ENCODE measurements at regions of chr6 and their contacts with region 1.

Region 1: DNA sequence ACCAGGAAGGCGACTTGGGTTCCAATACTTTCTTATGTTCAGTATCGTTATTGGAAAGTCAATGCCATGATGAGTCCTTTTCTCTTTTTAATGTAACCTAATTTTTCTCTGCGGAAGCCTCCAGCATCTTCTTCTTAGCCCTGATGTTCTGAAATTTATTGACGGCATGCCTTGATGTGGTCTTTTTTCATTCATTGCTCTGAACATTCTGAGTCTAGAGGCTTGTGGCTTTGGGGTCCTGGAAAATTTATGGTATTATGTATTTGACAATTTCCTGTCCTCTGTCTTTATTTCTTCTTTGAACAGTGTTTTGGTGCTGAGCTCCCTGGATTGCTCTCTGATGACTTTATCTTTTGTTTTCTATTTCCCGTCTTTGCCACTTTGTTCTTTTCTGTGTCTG is 28.7 kb upstream of the MAS1 start:
- DNase-seq: no peak
- ATAC-seq: no peak
- H3K4me3 ChIP-seq: no peak overlapping the region
- H3K27ac ChIP-seq: no peak overlapping the region
- H3K4me1 ChIP-seq: 0 out of 2 replicates have a peak, but pooled peaks cover 9% of the 10 kb centered on the region
- H3K27me3 ChIP-seq: peaks cover 10% of the 10 kb centered on the region in 2 experiments; a peak in 3 of 5 replicates
- CTCF ChIP-seq: no peak
- EP300 ChIP-seq: no peak
- POLR2A ChIP-seq: no peak
- RAD21 ChIP-seq: no peak

Region 2: DNA sequence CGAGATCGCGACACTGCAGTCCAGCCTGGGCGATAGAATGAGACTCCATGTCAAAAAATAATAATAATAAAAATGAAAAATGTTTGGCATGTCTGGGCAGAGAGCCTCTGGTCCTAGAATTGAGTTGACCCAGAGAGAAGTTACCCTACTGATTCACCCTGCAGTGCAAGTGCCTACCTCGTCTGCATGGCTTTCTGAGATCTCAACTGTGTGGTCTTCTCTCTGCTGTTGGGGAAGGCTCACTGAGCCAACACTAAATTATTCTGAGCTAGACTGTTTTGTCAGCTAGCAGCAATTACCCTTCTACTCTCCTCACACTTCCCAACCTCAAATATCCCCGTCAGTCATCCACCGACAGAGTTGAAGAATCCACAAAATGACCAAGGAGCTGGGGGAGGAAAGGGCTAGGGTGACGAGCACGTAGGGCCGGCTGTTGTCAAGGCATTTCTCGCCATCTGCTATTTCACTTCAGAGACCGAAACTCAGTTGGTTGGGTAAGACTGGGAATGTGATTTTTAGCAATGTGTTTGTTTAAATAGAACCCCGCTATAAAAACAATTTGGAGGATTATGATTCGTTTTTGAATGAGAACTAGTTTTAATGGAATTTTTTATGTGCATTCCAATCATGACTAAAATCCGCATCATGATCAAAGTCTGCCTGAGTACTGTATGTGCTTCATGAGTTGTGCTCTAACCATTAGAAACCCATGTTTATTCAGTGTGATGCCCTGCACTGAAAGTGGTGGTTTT is 38.1 kb after region 1 on chr6:
- CTCF ChIA-PET with region 1: no interaction called
- POLR2A ChIA-PET with region 1: no interaction called
- in situ Hi-C with region 1: no loop called
- intact Hi-C with region 1: loop called (anchors 1 kb)
- DNase-seq: no peak
- ATAC-seq: no peak
- H3K4me3 ChIP-seq: no peak overlapping the region
- H3K27ac ChIP-seq: no peak overlapping the region
- H3K4me1 ChIP-seq: no peaks in the 10 kb centered on the region
- H3K27me3 ChIP-seq: peaks cover 2 to 43% of the 10 kb centered on the region in 2 experiments
- CTCF ChIP-seq: no peak
- EP300 ChIP-seq: no peak
- POLR2A ChIP-seq: no peak
- RAD21 ChIP-seq: no peak

Region 3: GRCh38 chr6:159941286-159942113 is 79.4 kb after region 1 on chr6:
- CTCF ChIA-PET with region 1: interaction called, 18 read pairs
- POLR2A ChIA-PET with region 1: no interaction called
- in situ Hi-C with region 1: loop called (anchors 5 kb)
- intact Hi-C with region 1: loop called (anchors 1 kb)
- DNase-seq: peak; percentile 46
- ATAC-seq: peak; percentile 83
- H3K4me3 ChIP-seq: no peak overlapping the region
- H3K27ac ChIP-seq: no peak overlapping the region
- H3K4me1 ChIP-seq: peaks cover 14% of the 10 kb centered on the region
- H3K27me3 ChIP-seq: peaks cover 2 to 8% of the 10 kb centered on the region in 2 experiments; a peak in 2 of 5 replicates
- CTCF ChIP-seq: peak; percentile 80
- EP300 ChIP-seq: no peak
- POLR2A ChIP-seq: no peak
- RAD21 ChIP-seq: peak; percentile 61; the same call in 1 of the 2 replicates

Region 4: GRCh38 chr6:160041608-160042007 is 179.5 kb after region 1 on chr6:
- CTCF ChIA-PET with region 1: no interaction called
- POLR2A ChIA-PET with region 1: no interaction called
- in situ Hi-C with region 1: no loop called
- intact Hi-C with region 1: loop called (anchors 5 kb)
- DNase-seq: peak; percentile 22
- ATAC-seq: peak; percentile 51
- H3K4me3 ChIP-seq: no peak overlapping the region
- H3K27ac ChIP-seq: peak overlapping the region; percentile 68
- H3K4me1 ChIP-seq: peaks cover 34% of the 10 kb centered on the region
- H3K27me3 ChIP-seq: no peaks in the 10 kb centered on the region
- CTCF ChIP-seq: 0 out of 2 replicates have a peak, but pooled peaks have one; percentile 19
- EP300 ChIP-seq: no peak
- POLR2A ChIP-seq: no peak
- RAD21 ChIP-seq: peak; percentile 31; the same call in 1 of the 2 replicates

Region 5: GRCh38 chr6:160102956-160103824 is 241.1 kb after region 1 on chr6:
- CTCF ChIA-PET with region 1: interaction called, 4 read pairs
- POLR2A ChIA-PET with region 1: no interaction called
- in situ Hi-C with region 1: no loop called
- intact Hi-C with region 1: loop called (anchors 1 kb)
- DNase-seq: peak; percentile 45
- ATAC-seq: peak; percentile 53
- H3K4me3 ChIP-seq: no peak overlapping the region
- H3K27ac ChIP-seq: no peak overlapping the region
- H3K4me1 ChIP-seq: peaks cover 34% of the 10 kb centered on the region
- H3K27me3 ChIP-seq: no peaks in the 10 kb centered on the region
- CTCF ChIP-seq: peak; percentile 53
- EP300 ChIP-seq: no peak
- POLR2A ChIP-seq: no peak
- RAD21 ChIP-seq: peak; percentile 32; the same call in 1 of the 2 replicates

Region 6: DNA sequence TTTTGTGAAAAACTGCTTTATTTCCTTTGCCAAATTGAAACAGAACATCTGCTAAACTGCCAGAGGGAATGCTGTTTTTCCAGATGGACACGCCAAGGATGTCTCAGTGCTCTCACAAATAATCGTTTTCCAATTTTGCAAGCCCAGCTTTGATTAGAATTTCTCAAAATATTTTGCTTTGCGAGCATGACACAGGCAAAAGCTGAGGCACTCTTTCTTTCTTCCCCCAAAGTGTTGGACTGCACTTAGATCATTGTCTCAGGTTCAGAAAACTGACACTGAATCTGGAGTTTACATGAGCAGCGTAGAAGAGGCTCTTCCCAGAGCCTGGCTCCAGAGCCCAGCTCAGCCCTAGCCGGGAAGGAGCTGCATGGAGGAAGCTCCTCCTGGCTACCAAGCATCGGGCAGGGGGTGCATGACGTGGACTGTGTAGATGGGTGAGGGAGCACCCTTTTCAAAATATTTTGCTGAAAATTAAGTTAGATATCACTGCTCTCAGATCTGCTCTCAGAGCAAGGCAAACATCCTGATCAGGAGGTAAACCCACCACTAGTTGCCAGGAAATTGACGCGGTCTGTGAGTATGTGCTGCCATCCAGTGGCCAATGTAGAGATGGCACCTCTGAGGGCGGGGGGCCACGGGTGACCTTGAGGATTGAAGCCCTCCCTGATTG is 593.6 kb after region 1 on chr6:
- CTCF ChIA-PET with region 1: interaction called, 9 read pairs
- POLR2A ChIA-PET with region 1: no interaction called
- in situ Hi-C with region 1: loop called (anchors 5 kb)
- intact Hi-C with region 1: loop called (anchors 1 kb)
- DNase-seq: peak; percentile 62
- ATAC-seq: peak; percentile 86
- H3K4me3 ChIP-seq: no peak overlapping the region
- H3K27ac ChIP-seq: no peak overlapping the region
- H3K4me1 ChIP-seq: peaks cover 8% of the 10 kb centered on the region
- H3K27me3 ChIP-seq: no peaks in the 10 kb centered on the region
- CTCF ChIP-seq: peak; percentile 100
- EP300 ChIP-seq: no peak
- POLR2A ChIP-seq: no peak
- RAD21 ChIP-seq: peak; percentile 97

Region 7: DNA sequence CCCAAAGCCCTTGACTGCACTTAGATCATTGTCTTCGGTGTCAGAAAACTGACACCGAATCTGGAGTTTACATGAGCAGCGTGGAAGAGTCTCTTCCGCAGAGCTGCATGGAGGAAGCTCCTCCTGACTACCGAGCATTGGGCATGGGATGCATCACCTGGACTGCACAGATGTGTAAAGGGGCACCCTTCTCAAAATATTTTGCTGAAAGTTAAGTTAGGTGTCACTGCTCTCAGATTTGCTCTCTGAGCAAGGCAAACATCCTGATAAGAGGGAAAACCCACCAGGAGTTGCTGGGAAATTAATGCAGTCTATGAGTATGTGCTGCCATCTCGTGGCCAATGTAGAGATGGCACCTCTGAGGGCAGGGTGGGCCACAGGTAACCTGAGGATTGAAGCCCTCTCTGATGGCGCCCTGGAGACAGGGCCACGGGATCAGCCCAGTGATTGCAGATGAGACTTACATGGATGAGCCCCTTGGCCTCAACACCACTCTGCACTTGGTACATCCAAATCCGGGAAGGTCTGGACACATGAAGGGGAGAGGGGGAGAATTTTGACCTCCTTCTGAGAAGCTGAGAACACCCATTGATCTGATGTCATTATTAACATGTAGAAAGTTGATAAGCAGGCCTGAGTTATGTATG is 672.1 kb after region 1 on chr6:
- CTCF ChIA-PET with region 1: interaction called, 4 read pairs
- POLR2A ChIA-PET with region 1: no interaction called
- in situ Hi-C with region 1: no loop called
- intact Hi-C with region 1: loop called (anchors 1 kb)
- DNase-seq: peak; percentile 52
- ATAC-seq: peak; percentile 96
- H3K4me3 ChIP-seq: no peak overlapping the region
- H3K27ac ChIP-seq: no peak overlapping the region
- H3K4me1 ChIP-seq: peaks cover 4% of the 10 kb centered on the region; the same call in 1 of the 2 replicates
- H3K27me3 ChIP-seq: no peaks in the 10 kb centered on the region
- CTCF ChIP-seq: peak; percentile 97
- EP300 ChIP-seq: no peak
- POLR2A ChIP-seq: no peak
- RAD21 ChIP-seq: peak; percentile 89